ENCODE measurements at regions of chr12 and their contacts with region 1.

Region 1: DNA sequence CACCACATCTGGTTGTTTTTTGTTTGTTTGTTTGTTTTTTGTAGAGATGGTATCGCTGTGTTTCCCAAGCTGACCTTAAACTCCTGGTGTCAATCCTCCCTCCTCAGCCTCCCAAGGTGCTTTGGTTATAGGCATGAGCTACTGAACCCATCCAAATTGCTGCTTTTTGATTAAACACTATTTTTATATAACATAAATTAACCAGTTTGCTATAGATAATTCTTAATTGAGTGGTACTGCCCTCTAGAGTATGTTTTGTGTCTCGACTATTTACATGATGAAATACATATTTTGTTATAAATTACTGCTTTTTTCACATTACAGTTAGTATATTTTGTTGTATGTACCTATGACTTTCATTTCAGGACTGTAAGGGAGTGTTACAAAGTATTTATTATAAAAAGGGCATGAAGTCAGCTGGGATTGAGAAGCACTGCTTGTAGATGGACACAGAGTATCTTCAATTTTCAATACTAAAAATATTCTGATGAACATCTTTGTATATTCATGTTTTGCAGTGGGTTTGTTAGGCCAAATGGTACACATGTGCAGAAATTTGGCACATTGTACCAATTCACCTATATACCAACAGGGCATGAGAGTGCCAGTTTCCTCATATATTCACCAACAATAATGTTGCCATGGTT is 14.9 kb upstream of the SCAF11 start:
- DNase-seq: no peak
- H3K4me3 ChIP-seq: no peak overlapping the region
- CTCF ChIP-seq: no peak

Region 2: DNA sequence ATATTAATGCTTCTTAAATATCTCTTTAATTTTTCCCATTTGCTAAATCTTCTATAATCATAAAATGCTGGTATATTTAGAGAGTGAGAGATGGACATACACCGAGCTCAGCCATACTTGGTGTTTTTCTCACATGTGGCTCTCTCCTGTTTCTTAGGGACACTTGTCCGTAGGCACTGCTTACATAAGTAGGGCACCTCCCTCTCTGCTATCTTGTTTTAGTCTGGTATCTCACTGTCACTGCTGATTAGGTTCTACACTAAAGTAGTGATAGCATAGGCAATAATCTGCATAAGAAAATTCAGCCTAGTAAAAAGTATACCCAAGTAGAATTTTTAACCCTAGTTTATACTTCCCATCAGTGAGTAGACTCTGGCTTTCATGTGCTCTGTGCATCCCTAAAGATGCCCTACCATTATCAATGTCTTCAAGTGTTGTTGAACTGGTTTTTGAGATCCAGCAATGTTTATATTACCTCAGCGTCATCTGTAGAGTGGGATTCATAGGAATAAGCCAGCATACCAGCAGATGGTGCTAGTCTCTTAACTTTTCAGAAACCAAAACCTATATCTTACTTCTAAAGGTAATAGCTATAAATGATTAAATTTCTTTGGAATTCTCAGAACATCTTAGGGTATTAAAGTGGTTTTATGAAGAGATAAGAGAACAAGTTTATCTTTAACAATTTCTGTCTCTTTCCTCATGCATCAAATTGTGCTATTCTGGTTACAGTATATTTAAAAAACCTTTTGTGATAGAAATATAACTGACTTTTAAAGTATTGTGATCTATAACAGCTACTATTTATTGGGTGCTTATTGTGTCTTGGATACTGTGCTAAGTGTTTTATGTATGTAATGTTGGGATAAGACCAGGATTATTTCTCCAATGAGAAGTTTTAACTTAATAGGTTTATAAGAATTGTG is 242.8 kb before region 1 on chr12:
- CTCF ChIA-PET with region 1: interaction called, 30 read pairs
- POLR2A ChIA-PET with region 1: no interaction called
- DNase-seq: peak; percentile 10
- H3K4me3 ChIP-seq: no peak overlapping the region
- CTCF ChIP-seq: peak; percentile 65

Region 3: DNA sequence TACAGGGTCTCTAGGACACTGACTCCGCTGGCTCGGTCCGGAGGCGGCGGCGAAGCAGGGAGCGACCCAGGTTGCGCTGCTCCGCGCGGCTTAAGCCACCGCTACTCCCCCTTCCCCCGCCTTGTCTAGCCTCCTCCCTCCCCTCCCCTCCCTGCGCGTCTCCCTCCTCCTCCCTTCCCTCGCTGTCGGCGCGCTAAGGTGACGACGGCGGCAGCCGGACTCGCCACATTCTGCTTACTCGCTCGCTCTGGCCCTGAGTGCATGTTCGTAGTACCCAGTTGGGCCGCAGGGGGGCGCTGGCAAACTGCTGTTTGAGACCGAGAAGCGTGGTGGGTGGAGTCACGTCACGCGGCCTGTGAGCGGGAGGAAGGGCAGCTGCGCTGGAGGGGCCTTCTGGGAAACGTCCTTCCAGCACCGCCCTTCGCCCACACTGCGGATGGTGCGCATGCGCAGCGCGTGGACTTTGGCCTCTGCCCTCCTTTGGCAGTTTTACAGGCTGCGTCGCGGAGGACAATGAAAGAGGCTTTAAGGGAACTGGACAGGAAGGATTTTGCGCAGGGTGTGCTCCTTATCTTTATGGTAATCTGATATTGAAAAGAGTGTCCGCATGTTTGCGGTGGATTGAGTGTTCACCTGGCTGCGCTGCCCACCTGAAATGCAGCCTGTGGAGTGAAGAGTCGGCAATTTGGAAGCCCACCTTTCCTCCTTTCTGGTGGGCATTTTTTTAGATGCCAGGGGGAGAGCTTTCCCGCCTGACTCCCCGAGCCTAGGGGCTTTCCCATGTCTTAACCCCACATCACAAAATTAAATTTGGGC is 14.6 kb before region 1 on chr12 and contains the start of gene SCAF11:
- CTCF ChIA-PET with region 1: interaction called, 12 read pairs
- POLR2A ChIA-PET with region 1: no interaction called
- DNase-seq: peak; percentile 98
- H3K4me3 ChIP-seq: peak within 1 kb of the TSS; percentile 90
- CTCF ChIP-seq: peak; percentile 98

Region 4: DNA sequence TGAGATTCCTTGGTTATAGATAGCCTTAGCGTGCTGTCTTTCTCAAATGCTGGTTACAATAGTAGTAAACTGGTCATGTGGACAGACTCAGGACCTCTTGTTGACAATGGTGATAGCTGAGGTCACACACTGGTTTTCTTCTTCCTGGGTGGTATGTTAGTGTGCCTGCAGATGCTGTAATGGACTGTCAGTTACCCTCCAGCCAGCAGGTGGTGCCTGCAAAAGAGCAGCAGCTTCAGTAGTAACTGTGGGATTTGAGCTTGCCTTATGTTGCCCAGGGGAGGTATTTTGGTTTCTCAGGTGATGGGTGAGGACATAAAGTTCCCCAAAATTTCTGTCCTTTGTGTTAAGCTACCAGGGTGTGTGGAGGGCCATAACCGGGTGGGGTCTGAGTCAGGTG is 18.8 kb after region 1 on chr12:
- CTCF ChIA-PET with region 1: interaction called, 10 read pairs
- POLR2A ChIA-PET with region 1: no interaction called
- DNase-seq: no peak
- H3K4me3 ChIP-seq: no peak overlapping the region
- CTCF ChIP-seq: no peak

Region 5: GRCh38 chr12:46259713-46260112 is 254.4 kb after region 1 on chr12:
- CTCF ChIA-PET with region 1: no interaction called
- POLR2A ChIA-PET with region 1: no interaction called
- DNase-seq: no peak
- H3K4me3 ChIP-seq: no peak overlapping the region
- CTCF ChIP-seq: no peak